Lower lobe of right lung (tissue), 2 donors: ENCODE measurements at regions of chr20 and their contacts with region 1.

Region 1: DNA sequence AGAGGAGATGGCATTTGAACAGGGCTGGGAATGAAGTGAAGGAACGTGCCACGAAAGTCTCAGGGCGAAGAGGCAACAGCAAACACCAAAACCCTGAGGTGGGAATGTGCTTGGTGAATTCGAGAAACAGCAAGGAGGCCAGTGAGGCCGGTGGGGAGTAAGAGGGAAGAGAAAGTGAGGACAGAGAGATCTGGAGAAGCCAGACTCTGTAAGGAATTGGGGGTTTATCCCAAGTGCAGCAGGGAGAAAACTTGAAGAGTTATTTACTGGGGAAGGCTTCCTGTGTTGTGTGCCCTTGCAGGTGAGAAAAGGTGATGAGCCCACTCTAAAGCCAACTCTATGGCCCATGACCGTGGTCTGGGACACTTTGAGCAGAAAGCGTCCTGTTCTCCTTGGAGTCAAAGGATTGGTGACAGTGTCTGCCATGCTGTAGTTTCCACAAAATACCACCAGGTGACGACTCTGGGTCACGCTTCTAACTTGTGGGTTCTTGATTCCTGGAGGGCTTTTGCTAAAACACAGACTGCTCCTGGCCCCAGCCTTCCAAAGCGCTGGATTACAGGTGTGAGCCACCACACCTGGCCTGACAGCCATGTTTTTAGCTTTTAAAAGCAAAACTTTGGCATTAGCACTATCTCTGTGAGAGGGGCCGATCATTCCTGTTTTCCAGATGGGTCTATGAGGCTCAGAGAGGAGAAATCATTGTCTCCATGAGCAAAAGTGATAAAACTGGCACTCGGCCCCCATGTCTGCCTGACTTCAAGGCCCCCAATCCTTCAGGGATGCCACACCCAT is 18.0 kb upstream of the CSNK2A1 start:
- DNase-seq: no peak
- ATAC-seq: peak; percentile 81 to 87
- H3K4me3 ChIP-seq: no peak overlapping the region
- H3K27ac ChIP-seq: no peak overlapping the region
- H3K4me1 ChIP-seq: no peaks in the 10 kb centered on the region
- H3K27me3 ChIP-seq: no peaks in the 10 kb centered on the region
- CTCF ChIP-seq: peak; percentile 96

Region 2: GRCh38 chr20:433300-433975 is 128.2 kb before region 1 on chr20:
- intact Hi-C with region 1: no loop called
- DNase-seq: no peak
- ATAC-seq: no peak
- H3K4me3 ChIP-seq: no peak overlapping the region
- H3K27ac ChIP-seq: no peak overlapping the region
- H3K4me1 ChIP-seq: peaks cover 9% of the 10 kb centered on the region
- H3K27me3 ChIP-seq: no peaks in the 10 kb centered on the region
- CTCF ChIP-seq: no peak

Region 3: GRCh38 chr20:733861-734260 is 172.2 kb after region 1 on chr20:
- intact Hi-C with region 1: loop called (anchors 10 kb)
- DNase-seq: no peak
- ATAC-seq: no peak
- H3K4me3 ChIP-seq: no peak overlapping the region
- H3K27ac ChIP-seq: no peak overlapping the region
- H3K4me1 ChIP-seq: no peaks in the 10 kb centered on the region
- H3K27me3 ChIP-seq: peaks cover 27% of the 10 kb centered on the region
- CTCF ChIP-seq: no peak